K562 (cell line): ENCODE measurements at regions of chr12 and their contacts with region 1.

Region 1: GRCh38 chr12:116533343-116534251 is 25.6 kb upstream of the MAP1LC3B2 start:
- DNase-seq: peak; percentile 89 to 99 (median 98)
- ATAC-seq: peak; percentile 97
- H3K4me3 ChIP-seq: peak overlapping the region; percentile 53
- H3K27ac ChIP-seq: peak overlapping the region; percentile 73
- H3K4me1 ChIP-seq: peaks cover 21 to 22% of the 10 kb centered on the region in 2 experiments
- H3K27me3 ChIP-seq: no peaks in the 10 kb centered on the region
- CTCF ChIP-seq: no peak
- EP300 ChIP-seq: peak; percentile 7; the same call in 1 of the 2 replicates
- POLR2A ChIP-seq: peak; percentile 53
- RAD21 ChIP-seq: peak in 1 of 2 experiments; percentile 12; a peak in 1 of 4 replicates

Region 2: GRCh38 chr12:115998119-115998633 is 535.4 kb before region 1 on chr12:
- CTCF ChIA-PET with region 1: no interaction called
- POLR2A ChIA-PET with region 1: no interaction called
- in situ Hi-C with region 1: no loop called
- intact Hi-C with region 1: no loop called
- DNase-seq: peak; percentile 31 to 53 (median 31)
- ATAC-seq: peak; percentile 50
- H3K4me3 ChIP-seq: no peak overlapping the region
- H3K27ac ChIP-seq: no peak overlapping the region
- H3K4me1 ChIP-seq: no peaks in the 10 kb centered on the region
- H3K27me3 ChIP-seq: no peaks in the 10 kb centered on the region
- CTCF ChIP-seq: peak; percentile 36 to 77 (median 60); a peak in 4 of 6 replicates
- EP300 ChIP-seq: no peak
- POLR2A ChIP-seq: no peak
- RAD21 ChIP-seq: peak; percentile 60 to 65

Region 3: GRCh38 chr12:116515684-116516083 is 17.9 kb before region 1 on chr12:
- CTCF ChIA-PET with region 1: no interaction called
- POLR2A ChIA-PET with region 1: no interaction called
- in situ Hi-C with region 1: no loop called
- intact Hi-C with region 1: no loop called
- DNase-seq: no peak
- ATAC-seq: no peak
- H3K4me3 ChIP-seq: no peak overlapping the region
- H3K27ac ChIP-seq: no peak overlapping the region
- H3K4me1 ChIP-seq: peaks cover 0 to 2% of the 10 kb centered on the region in 2 experiments; a peak in 1 of 5 replicates
- H3K27me3 ChIP-seq: no peaks in the 10 kb centered on the region
- CTCF ChIP-seq: no peak
- EP300 ChIP-seq: no peak
- POLR2A ChIP-seq: no peak
- RAD21 ChIP-seq: no peak

Region 4: GRCh38 chr12:116599285-116600136 is 65.9 kb after region 1 on chr12:
- CTCF ChIA-PET with region 1: no interaction called
- POLR2A ChIA-PET with region 1: no interaction called
- in situ Hi-C with region 1: no loop called
- intact Hi-C with region 1: loop called (anchors 1 kb)
- DNase-seq: peak; percentile 87 to 90 (median 89)
- ATAC-seq: peak; percentile 90
- H3K4me3 ChIP-seq: no peak overlapping the region
- H3K27ac ChIP-seq: peak overlapping the region; percentile 85
- H3K4me1 ChIP-seq: peaks cover 30 to 39% of the 10 kb centered on the region in 2 experiments
- H3K27me3 ChIP-seq: no peaks in the 10 kb centered on the region
- CTCF ChIP-seq: peak; percentile 65 to 71 (median 66)
- EP300 ChIP-seq: no peak
- POLR2A ChIP-seq: no peak
- RAD21 ChIP-seq: peak in 1 of 2 experiments; percentile 65; a peak in 3 of 4 replicates